ENCODE measurements at regions of chr9 and their contacts with region 1.

Region 1: GRCh38 chr9:113807173-113808061 is 68.7 kb upstream of the ZNF618 start:
- DNase-seq: no peak
- ATAC-seq: peak; percentile 58; the same call in 2 of the 3 replicates
- H3K4me3 ChIP-seq: no peak overlapping the region
- H3K27ac ChIP-seq: no peak overlapping the region
- H3K4me1 ChIP-seq: no peaks in the 10 kb centered on the region
- H3K27me3 ChIP-seq: no peaks in the 10 kb centered on the region
- CTCF ChIP-seq: peak; percentile 75 to 87 (median 86)
- EP300 ChIP-seq: no peak
- POLR2A ChIP-seq: no peak
- RAD21 ChIP-seq: peak; percentile 61

Region 2: GRCh38 chr9:113741886-113742854 is 65.2 kb before region 1 on chr9:
- CTCF ChIA-PET with region 1: no interaction called
- POLR2A ChIA-PET with region 1: no interaction called
- RAD21 ChIA-PET with region 1: no interaction called
- SMC1A ChIA-PET with region 1: no interaction called
- in situ Hi-C with region 1: no loop called
- intact Hi-C with region 1: no loop called
- DNase-seq: no peak
- ATAC-seq: no peak
- H3K4me3 ChIP-seq: no peak overlapping the region
- H3K27ac ChIP-seq: no peak overlapping the region
- H3K4me1 ChIP-seq: no peaks in the 10 kb centered on the region
- H3K27me3 ChIP-seq: peaks cover 0 to 2% of the 10 kb centered on the region in 2 experiments; a peak in 2 of 4 replicates
- CTCF ChIP-seq: no peak
- EP300 ChIP-seq: no peak
- POLR2A ChIP-seq: no peak
- RAD21 ChIP-seq: no peak

Region 3: GRCh38 chr9:113876151-113876992 is 69.0 kb after region 1 on chr9 and contains the start of gene ZNF618:
- CTCF ChIA-PET with region 1: interaction called, 10 read pairs
- POLR2A ChIA-PET with region 1: no interaction called
- RAD21 ChIA-PET with region 1: interaction called, 4 read pairs
- SMC1A ChIA-PET with region 1: no interaction called
- in situ Hi-C with region 1: no loop called
- intact Hi-C with region 1: loop called (anchors 5 kb)
- DNase-seq: no peak
- ATAC-seq: peak; percentile 65
- H3K4me3 ChIP-seq: peak within 1 kb of the TSS; percentile 73
- H3K27ac ChIP-seq: no peak within 1 kb of the TSS
- H3K4me1 ChIP-seq: no peaks in the 10 kb centered on the region
- H3K27me3 ChIP-seq: peaks cover 0 to 4% of the 10 kb centered on the region in 2 experiments; a peak in 2 of 4 replicates
- CTCF ChIP-seq: peak; percentile 0 to 20 (median 17); a peak in 2 of 6 replicates
- EP300 ChIP-seq: no peak
- POLR2A ChIP-seq: no peak
- RAD21 ChIP-seq: no peak
- polyA plus RNA-seq, gene ZNF618: 0.02 TPM in 1 of 2 experiments, not detected in the other

Region 4: GRCh38 chr9:113963017-113963620 is 155.7 kb after region 1 on chr9:
- CTCF ChIA-PET with region 1: interaction called, 18 read pairs
- POLR2A ChIA-PET with region 1: no interaction called
- RAD21 ChIA-PET with region 1: no interaction called
- SMC1A ChIA-PET with region 1: no interaction called
- in situ Hi-C with region 1: no loop called
- intact Hi-C with region 1: loop called (anchors 5 kb)
- DNase-seq: no peak
- ATAC-seq: peak; percentile 69
- H3K4me3 ChIP-seq: no peak overlapping the region
- H3K27ac ChIP-seq: no peak overlapping the region
- H3K4me1 ChIP-seq: no peaks in the 10 kb centered on the region
- H3K27me3 ChIP-seq: peaks cover 0 to 2% of the 10 kb centered on the region in 2 experiments; a peak in 2 of 4 replicates
- CTCF ChIP-seq: peak; percentile 50 to 70 (median 58); a peak in 5 of 6 replicates
- EP300 ChIP-seq: no peak
- POLR2A ChIP-seq: no peak
- RAD21 ChIP-seq: peak; percentile 37; the same call in 1 of the 2 replicates

Region 5: DNA sequence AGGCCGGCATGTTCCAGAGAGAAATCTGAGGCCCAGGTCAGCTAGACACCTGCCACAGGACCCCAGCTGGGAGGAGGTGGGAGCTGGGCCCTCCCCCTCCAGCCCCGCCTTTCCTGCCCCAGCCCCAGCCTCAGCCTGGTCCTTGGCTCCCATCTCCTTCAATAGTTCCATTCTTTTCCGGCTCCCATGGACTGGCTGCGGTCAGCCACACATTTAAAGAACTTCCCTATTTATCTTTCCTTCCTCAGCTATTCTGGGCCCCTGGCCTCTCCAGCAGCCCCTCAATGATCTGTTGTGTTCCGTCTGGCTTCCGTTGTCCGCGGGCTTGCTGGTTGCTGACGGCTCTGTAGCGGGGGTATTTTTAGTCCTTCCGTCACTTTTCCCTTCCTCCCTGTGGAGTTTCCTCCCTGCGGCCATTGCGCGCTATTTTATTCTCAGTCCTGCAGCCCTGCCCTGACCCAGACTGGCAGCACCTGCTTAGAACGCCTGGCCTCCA is 196.9 kb after region 1 on chr9:
- CTCF ChIA-PET with region 1: no interaction called
- POLR2A ChIA-PET with region 1: no interaction called
- RAD21 ChIA-PET with region 1: no interaction called
- SMC1A ChIA-PET with region 1: no interaction called
- in situ Hi-C with region 1: no loop called
- intact Hi-C with region 1: no loop called
- DNase-seq: no peak
- ATAC-seq: no peak
- H3K4me3 ChIP-seq: no peak overlapping the region
- H3K27ac ChIP-seq: no peak overlapping the region
- H3K4me1 ChIP-seq: no peaks in the 10 kb centered on the region; the same call in 1 of the 2 replicates
- H3K27me3 ChIP-seq: no peaks in the 10 kb centered on the region; a peak in 2 of 4 replicates
- CTCF ChIP-seq: no peak
- EP300 ChIP-seq: no peak
- POLR2A ChIP-seq: no peak
- RAD21 ChIP-seq: no peak